H1 (cell line): ENCODE measurements at regions of chr20 and their contacts with region 1.

Region 1: DNA sequence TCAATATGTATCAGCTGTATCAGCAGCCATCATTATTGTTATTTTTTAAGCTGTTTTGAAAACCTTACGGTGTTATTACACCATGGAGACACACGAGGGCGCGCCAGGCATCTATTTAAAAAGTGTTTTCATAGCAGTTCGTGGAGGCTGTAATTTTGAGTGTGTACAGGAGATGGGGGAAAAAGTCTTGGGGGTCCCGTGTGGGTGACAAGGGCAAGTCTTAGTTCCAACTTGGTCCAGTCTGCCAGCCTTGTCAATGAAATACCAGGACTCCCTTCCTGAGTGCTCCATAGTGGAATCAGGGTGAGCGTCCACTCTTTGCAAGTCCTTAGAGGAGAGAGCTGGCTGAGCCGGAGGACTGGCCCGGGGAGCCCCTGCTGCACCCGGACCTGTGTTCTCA is 43.3 kb downstream of the SLC2A10 start:
- DNase-seq: peak in 1 of 2 experiments; percentile 80
- H3K4me3 ChIP-seq: peak overlapping the region in 1 of 4 experiments; percentile 26; a peak in 3 of 8 replicates
- H3K27ac ChIP-seq: no peak overlapping the region
- H3K4me1 ChIP-seq: no peaks in the 10 kb centered on the region
- H3K27me3 ChIP-seq: no peaks in the 10 kb centered on the region
- CTCF ChIP-seq: peak in 2 of 3 experiments; percentile 67 to 68; a peak in 3 of 4 replicates
- EP300 ChIP-seq: no peak
- POLR2A ChIP-seq: no peak
- RAD21 ChIP-seq: peak; percentile 78 to 83

Region 2: DNA sequence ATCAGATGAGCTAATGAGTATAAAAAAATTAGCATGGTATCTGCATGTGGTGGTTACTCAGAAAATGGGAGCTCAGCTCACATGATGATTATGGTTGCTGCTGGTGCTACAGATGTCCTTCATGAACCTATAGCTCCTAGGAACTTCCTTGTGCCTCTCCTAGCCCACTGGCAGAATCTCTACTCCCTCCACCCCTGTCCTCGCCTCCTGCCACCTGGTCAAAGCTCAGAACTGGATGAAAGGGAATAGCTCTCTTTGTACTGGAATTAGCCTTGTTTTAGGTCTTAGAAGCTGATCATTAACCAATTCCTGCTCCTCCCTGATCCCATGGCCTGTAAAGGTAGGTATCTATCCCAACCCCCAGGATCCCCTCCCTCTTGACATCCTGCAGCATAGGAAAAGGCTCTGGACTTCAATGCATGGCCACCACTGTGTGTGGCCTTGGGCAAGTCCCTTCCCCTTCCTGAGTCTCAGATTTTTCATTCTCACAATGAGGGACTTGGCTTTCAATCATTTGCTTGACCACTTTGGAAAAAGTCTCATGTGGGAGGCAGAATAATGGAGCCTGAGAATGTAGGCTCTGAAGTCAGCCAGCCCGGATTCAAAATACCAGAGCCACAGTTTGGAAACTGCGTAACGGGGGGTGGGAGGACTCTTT is 145.4 kb before region 1 on chr20:
- CTCF ChIA-PET with region 1: no interaction called
- POLR2A ChIA-PET with region 1: no interaction called
- DNase-seq: no peak
- H3K4me3 ChIP-seq: no peak overlapping the region
- H3K27ac ChIP-seq: no peak overlapping the region
- H3K4me1 ChIP-seq: no peaks in the 10 kb centered on the region
- H3K27me3 ChIP-seq: no peaks in the 10 kb centered on the region
- CTCF ChIP-seq: no peak
- EP300 ChIP-seq: no peak
- POLR2A ChIP-seq: no peak
- RAD21 ChIP-seq: no peak

Region 3: GRCh38 chr20:46739431-46740129 is 13.1 kb before region 1 on chr20:
- CTCF ChIA-PET with region 1: interaction called, 10 read pairs
- POLR2A ChIA-PET with region 1: no interaction called
- DNase-seq: no peak
- H3K4me3 ChIP-seq: no peak overlapping the region
- H3K27ac ChIP-seq: no peak overlapping the region
- H3K4me1 ChIP-seq: peaks cover 0 to 4% (median 0%) of the 10 kb centered on the region in 4 experiments; a peak in 2 of 7 replicates
- H3K27me3 ChIP-seq: no peaks in the 10 kb centered on the region
- CTCF ChIP-seq: no peak
- EP300 ChIP-seq: no peak
- POLR2A ChIP-seq: no peak
- RAD21 ChIP-seq: no peak

Region 4: DNA sequence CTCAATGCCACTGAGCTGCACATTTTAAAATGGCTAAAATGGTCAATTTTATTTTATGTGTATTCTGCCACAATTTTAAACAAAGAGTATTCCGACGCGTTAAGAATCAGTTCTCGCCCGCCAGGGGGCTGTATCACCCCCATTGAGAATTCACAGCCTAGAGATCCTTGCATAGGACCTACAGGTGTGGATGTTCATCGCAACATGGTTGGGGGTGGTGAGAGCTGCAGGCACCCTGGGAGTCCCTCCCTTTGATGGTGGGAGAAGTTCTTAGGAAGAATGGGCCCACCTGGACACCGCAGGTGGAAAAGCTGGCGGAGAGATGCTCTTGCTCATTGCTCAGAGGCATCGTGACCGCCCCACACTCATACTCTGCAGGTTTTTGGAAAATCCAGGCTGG is 20.2 kb after region 1 on chr20:
- CTCF ChIA-PET with region 1: interaction called, 12 read pairs
- POLR2A ChIA-PET with region 1: no interaction called
- DNase-seq: no peak
- H3K4me3 ChIP-seq: no peak overlapping the region
- H3K27ac ChIP-seq: no peak overlapping the region
- H3K4me1 ChIP-seq: no peaks in the 10 kb centered on the region; a peak in 1 of 7 replicates
- H3K27me3 ChIP-seq: no peaks in the 10 kb centered on the region; a peak in 1 of 7 replicates
- CTCF ChIP-seq: peak in 2 of 3 experiments; percentile 18 to 25; a peak in 2 of 4 replicates
- EP300 ChIP-seq: no peak
- POLR2A ChIP-seq: no peak
- RAD21 ChIP-seq: peak; percentile 41 to 51

Region 5: DNA sequence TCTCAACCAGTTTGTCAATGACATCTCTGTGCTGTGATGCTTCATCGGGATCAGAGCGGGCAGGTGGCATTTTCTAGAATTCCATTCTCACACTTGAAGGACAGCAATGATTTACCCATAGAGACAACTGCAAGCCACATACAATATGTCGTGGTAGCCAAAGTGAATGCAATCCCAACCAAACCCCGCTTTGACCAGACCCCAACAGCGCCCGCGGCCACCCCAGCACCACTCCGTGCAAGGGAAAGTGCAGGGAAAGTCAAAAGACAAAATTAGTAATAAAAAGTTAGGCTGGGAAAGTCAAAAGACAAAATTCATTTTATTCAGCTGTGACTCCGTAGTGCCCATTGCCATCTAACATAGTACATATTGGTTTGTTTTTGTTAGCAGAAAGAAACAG is 53.1 kb after region 1 on chr20:
- CTCF ChIA-PET with region 1: no interaction called
- POLR2A ChIA-PET with region 1: no interaction called
- DNase-seq: no peak
- H3K4me3 ChIP-seq: no peak overlapping the region
- H3K27ac ChIP-seq: no peak overlapping the region
- H3K4me1 ChIP-seq: peaks cover 0 to 4% (median 1%) of the 10 kb centered on the region in 4 experiments; a peak in 2 of 7 replicates
- H3K27me3 ChIP-seq: no peaks in the 10 kb centered on the region
- CTCF ChIP-seq: no peak
- EP300 ChIP-seq: no peak
- POLR2A ChIP-seq: no peak
- RAD21 ChIP-seq: no peak

Region 6: GRCh38 chr20:46998477-46999240 is 245.9 kb after region 1 on chr20:
- CTCF ChIA-PET with region 1: interaction called, 11 read pairs
- POLR2A ChIA-PET with region 1: no interaction called
- DNase-seq: no peak
- H3K4me3 ChIP-seq: no peak overlapping the region
- H3K27ac ChIP-seq: no peak overlapping the region
- H3K4me1 ChIP-seq: peaks cover 2 to 20% (median 16%) of the 10 kb centered on the region in 4 experiments; a peak in 6 of 7 replicates
- H3K27me3 ChIP-seq: no peaks in the 10 kb centered on the region
- CTCF ChIP-seq: no peak
- EP300 ChIP-seq: no peak
- POLR2A ChIP-seq: no peak
- RAD21 ChIP-seq: no peak

Region 7: DNA sequence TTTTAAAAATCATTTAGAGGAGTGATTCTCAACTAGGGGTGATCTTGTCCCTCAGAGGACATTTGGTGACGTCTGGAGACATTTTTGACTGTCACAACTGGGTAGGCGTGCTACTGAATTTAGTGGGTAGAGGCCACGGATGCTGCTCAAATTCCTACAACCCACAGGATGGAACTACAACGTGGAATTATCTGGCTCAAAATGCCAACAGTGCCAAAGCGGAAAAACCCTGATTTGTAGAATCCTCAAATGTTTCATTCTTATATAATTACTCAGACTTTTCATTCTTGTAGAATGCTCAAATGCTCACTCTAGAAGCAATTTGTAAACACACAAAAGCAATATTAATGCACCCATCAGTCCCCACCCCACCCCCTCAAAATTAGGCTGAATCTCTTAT is 374.0 kb after region 1 on chr20:
- CTCF ChIA-PET with region 1: interaction called, 14 read pairs
- POLR2A ChIA-PET with region 1: no interaction called
- DNase-seq: no peak
- H3K4me3 ChIP-seq: no peak overlapping the region
- H3K27ac ChIP-seq: no peak overlapping the region
- H3K4me1 ChIP-seq: peaks cover 0 to 7% (median 2%) of the 10 kb centered on the region in 4 experiments; a peak in 4 of 7 replicates
- H3K27me3 ChIP-seq: no peaks in the 10 kb centered on the region
- CTCF ChIP-seq: no peak
- EP300 ChIP-seq: no peak
- POLR2A ChIP-seq: no peak
- RAD21 ChIP-seq: no peak

Region 8: GRCh38 chr20:47150403-47151152 is 397.9 kb after region 1 on chr20:
- CTCF ChIA-PET with region 1: interaction called, 35 read pairs
- POLR2A ChIA-PET with region 1: no interaction called
- DNase-seq: peak; percentile 51 to 84
- H3K4me3 ChIP-seq: no peak overlapping the region
- H3K27ac ChIP-seq: no peak overlapping the region
- H3K4me1 ChIP-seq: peaks cover 0 to 3% (median 0%) of the 10 kb centered on the region in 4 experiments; a peak in 1 of 7 replicates
- H3K27me3 ChIP-seq: no peaks in the 10 kb centered on the region
- CTCF ChIP-seq: peak; percentile 87 to 97 (median 89)
- EP300 ChIP-seq: no peak
- POLR2A ChIP-seq: no peak
- RAD21 ChIP-seq: peak; percentile 94 to 95

Region 9: DNA sequence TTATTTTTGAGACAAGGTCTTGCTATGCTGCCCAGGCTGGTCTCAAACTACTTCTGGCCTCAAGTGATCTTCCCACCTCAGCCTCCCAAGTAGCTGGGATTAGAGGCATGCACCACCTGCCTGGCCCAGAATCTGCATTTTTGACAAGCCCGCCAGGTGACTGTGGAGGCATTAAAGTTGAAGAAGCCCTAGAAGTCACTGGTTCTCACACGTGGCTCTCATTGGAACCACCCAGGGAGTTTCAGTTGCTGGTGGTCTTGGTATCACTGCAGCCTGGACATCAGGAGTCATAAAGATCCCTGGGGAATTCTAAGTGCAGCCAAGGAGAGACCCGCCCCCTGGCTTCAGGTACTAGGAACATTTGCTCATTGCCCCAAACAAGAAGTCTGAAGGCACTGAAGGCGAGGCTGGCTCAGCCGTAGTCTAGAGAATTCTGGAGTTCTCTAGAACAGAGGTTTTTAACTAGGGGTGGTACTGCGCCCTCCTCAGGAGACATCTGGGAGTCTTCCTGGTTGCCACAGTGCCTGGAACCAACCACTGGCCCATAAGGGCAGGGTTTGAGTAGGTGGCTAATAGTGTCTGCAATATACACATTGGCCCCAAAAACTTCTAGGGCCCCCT is 421.0 kb after region 1 on chr20:
- CTCF ChIA-PET with region 1: interaction called, 14 read pairs
- POLR2A ChIA-PET with region 1: no interaction called
- DNase-seq: no peak
- H3K4me3 ChIP-seq: no peak overlapping the region
- H3K27ac ChIP-seq: no peak overlapping the region
- H3K4me1 ChIP-seq: no peaks in the 10 kb centered on the region
- H3K27me3 ChIP-seq: peaks cover 0 to 3% (median 0%) of the 10 kb centered on the region in 4 experiments; a peak in 1 of 7 replicates
- CTCF ChIP-seq: peak in 2 of 3 experiments; percentile 39 to 40; a peak in 3 of 4 replicates
- EP300 ChIP-seq: no peak
- POLR2A ChIP-seq: no peak
- RAD21 ChIP-seq: peak; percentile 38 to 61